Gastrocnemius medialis (tissue), 4 donors: ENCODE measurements at regions of chr5 and their contacts with region 1.

Region 1: GRCh38 chr5:138520971-138521370 is 22.1 kb downstream of the ETF1 start:
- DNase-seq: no peak
- ATAC-seq: no peak
- H3K4me3 ChIP-seq: no peak overlapping the region
- H3K27ac ChIP-seq: no peak overlapping the region
- H3K4me1 ChIP-seq: peaks cover 0 to 10% of the 10 kb centered on the region in 2 donors
- H3K27me3 ChIP-seq: no peaks in the 10 kb centered on the region
- CTCF ChIP-seq: no peak
- POLR2A ChIP-seq: no peak

Region 2: GRCh38 chr5:138491669-138492559 is 29.1 kb before region 1 on chr5:
- in situ Hi-C with region 1: no loop called
- intact Hi-C with region 1: loop called (anchors 1 kb)
- DNase-seq: peak; percentile 79 to 87
- ATAC-seq: peak; percentile 92 to 93
- H3K4me3 ChIP-seq: peak overlapping the region; percentile 60 to 85 (median 64)
- H3K27ac ChIP-seq: peak overlapping the region; percentile 34 to 63 (median 56)
- H3K4me1 ChIP-seq: peaks cover 14 to 17% of the 10 kb centered on the region in 2 donors
- H3K27me3 ChIP-seq: peaks cover 28 to 40% (median 29%) of the 10 kb centered on the region in 3 donors
- CTCF ChIP-seq: peak in 2 of 5 experiments; percentile 8 to 11
- POLR2A ChIP-seq: peak in 1 of 2 donors; percentile 23

Region 3: DNA sequence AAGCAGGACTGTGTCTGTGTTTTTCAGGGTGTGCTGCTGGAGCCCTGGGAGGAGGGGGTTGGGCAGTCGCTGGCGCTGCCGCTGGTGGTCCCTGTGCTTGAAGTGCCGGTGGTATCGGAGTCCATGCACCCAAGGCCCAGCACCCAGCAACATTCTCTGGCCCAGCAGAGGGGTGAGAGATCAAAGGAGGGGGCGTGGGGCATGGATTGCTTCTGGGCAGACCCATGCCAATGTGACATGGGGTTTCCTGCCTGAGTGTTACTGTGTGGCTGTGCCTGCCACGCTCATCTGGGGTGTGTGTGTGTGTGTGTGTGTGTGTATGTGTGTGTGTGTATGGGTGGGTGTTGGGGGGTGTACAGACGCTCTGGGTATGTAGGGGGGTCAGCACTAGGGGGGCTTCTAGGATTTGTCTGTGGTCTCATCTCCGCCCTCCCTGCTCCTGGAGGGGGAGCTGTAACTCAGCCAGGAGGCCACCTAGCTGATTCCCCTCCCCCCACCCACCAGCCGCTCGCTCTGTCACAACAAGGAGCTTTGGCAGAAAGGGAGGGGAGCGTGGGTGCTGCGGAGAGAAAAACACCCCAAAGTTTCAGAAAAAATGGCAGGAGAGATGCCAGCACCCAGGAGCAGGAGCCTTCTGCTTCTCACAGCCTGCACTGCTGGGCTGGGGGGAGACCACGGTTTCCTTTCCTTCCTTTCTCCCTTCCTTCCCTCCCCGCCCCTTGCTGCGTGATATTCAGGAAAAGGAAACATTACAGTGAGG is 90.1 kb after region 1 on chr5:
- in situ Hi-C with region 1: no loop called
- intact Hi-C with region 1: no loop called
- DNase-seq: no peak
- ATAC-seq: no peak
- H3K4me3 ChIP-seq: peak overlapping the region in 1 of 4 donors; percentile 48
- H3K27ac ChIP-seq: peak overlapping the region in 1 of 4 donors; percentile 41
- H3K4me1 ChIP-seq: no peaks in the 10 kb centered on the region
- H3K27me3 ChIP-seq: no peaks in the 10 kb centered on the region
- CTCF ChIP-seq: peak in 1 of 5 experiments; percentile 16
- POLR2A ChIP-seq: no peak